GM13976 (cell line): ENCODE measurements at regions of chr4 and their contacts with region 1.

Region 1: DNA sequence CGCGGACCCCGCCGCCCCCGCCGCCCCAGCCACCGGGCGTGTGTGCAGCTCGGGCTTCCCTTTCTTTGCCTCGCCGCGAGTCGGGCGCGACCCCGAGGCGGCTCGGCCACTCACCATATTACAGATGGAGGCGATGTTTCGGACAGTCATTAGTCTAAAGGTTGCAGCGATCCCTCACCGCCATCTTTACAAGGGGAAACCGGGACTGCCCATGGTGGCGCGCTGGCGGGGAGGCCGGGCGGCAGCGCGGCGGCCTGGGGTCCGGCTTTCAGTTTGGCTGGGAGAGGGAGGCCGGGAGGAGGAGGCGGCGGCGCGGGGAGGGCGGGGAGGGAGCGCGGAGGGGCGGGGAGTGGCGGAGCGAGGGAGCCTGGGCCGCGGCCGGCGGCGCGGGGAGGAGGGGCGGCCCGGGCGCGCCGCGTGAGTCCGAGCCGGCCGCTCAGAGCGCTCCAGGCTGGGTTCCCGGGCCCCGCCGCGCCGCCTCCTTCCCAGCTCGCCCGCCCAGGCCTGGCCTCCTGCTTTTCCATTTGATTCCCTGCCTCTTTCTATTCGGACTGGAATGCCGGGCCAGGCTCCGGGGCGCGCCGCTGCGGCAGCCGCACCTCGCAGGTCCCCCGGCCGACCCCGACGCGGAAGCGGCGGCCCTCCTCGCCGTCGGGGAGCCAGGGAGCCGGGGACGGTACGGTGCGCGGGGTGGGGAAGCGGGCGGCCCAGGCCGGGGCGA is at the start of gene USP46:
- DNase-seq: peak; percentile 93
- CTCF ChIP-seq: no peak

Region 2: GRCh38 chr4:52376132-52376704 is 282.9 kb before region 1 on chr4:
- in situ Hi-C with region 1: loop called (anchors 10 kb)
- DNase-seq: peak; percentile 34
- CTCF ChIP-seq: peak; percentile 12

Region 3: DNA sequence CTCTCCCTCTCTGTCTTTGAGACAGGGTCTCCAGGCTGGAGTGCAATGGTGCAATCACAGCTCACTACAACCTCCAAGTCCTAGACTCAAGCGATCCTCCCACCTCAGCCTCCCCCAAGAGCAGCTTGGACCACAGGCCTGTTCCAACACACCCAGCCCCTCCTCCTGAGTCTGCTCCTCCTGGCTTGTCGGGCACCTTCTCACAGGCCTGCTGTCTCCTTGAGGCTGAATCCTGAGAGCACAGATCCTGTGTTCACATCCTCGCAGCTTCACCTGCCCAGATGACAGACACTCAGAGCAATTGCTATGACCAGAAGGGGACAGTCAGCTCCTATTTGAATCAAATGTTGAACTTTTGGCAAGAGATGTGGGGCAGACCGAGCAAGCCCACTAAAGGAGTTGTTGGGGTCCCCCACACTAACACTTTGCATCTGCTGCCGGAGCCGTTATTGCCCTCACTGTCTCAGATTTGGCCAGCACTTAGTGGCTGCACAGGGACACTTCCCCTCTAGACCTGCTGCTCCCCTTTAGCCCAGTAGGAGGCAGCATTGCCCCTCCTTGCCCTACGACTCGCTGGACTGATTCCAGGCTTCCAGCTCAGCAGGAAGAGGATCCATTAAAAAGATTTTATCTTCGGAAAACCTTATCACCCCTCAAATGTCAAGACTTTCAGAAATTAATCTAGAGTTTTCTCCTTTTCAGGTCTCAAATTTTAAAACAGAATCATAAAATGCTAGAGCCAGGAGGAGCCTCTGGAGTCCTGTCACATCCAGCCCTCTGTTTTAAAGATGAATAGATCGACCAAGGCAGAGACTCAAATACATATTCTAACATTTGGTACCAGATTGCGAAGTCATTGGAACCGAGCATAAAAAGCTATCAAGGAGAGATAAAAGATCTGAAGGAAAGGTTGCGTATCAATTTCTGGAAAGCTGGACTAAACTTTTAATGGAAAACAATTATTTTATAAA is 113.8 kb before region 1 on chr4:
- in situ Hi-C with region 1: loop called (anchors 10 kb)
- DNase-seq: peak; percentile 72
- CTCF ChIP-seq: peak; percentile 92

Region 4: GRCh38 chr4:52853351-52853750 is 194.2 kb after region 1 on chr4:
- in situ Hi-C with region 1: no loop called
- DNase-seq: no peak
- CTCF ChIP-seq: no peak

Region 5: DNA sequence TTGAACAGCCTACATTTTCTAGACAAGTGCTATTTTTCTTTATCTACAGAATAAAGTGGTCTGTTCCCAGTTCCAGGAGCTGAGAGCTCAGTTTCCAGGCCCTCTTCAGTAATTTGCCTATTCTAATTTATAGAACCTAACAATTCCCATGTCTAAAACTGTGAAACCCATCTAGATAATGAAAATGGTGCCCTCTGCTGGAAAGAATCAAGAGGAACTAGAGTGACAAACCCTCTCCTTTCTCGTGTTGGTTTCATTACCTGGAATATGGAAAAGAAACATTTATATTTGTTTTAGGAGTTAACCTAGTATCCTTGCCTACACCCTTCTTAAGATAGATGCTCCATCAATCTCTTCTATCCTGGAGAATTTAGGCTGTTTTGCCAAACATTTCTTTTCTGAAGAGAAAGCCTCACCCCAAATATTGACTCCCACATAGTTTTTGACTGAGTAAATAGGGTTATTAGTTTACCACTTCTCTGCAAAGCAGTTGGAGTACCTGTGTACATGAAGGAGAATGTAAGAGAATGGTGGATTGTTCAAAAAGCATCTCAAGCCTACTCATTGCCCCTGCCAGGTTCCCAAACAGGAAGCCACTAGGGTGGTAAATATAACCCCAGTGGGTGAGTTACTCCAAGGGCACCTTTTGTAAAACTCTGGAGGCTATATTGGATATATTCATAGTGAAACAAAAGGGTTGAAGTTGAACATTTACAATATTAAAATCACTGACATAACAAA is 324.6 kb after region 1 on chr4:
- in situ Hi-C with region 1: loop called (anchors 25 kb)
- DNase-seq: peak; percentile 57
- CTCF ChIP-seq: peak; percentile 20